Gastrocnemius medialis (tissue), 4 donors: ENCODE measurements at regions of chr7 and their contacts with region 1.

Region 1: DNA sequence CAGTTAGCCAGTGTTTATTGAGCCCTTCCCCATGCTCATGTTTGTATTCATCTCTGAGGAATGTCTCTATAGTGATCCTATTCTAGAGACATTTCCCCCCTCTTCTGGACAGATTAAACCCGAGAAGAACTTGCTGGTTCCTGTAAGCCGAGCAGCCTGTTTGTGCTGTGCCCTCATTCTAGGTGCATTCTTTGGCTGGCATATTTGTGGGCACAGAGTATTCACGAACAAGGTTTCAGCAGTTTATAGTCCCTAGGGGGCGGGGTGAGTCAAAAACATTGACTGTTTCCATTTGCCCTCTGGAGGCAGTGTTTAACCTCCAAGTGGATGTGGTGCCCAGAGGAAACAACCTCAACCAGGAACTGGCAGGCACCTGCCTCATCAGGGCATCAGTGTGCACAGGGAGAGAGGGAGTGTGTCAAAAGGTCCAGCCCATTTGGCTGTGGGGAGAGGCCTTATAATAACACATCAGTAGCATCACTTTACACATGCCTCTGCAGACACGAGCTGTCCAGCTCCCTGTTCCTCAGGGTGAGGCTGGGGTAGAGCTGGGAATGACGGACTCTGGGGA is 273.3 kb upstream of the LRGUK start:
- DNase-seq: peak; percentile 22 to 49
- ATAC-seq: peak; percentile 77 to 82
- H3K4me3 ChIP-seq: no peak overlapping the region
- H3K27ac ChIP-seq: peak overlapping the region in 3 of 4 donors; percentile 0 to 61 (median 43)
- H3K4me1 ChIP-seq: peaks cover 16 to 21% of the 10 kb centered on the region in 2 donors
- H3K27me3 ChIP-seq: no peaks in the 10 kb centered on the region
- CTCF ChIP-seq: peak in 2 of 5 experiments; percentile 28 to 48
- POLR2A ChIP-seq: no peak

Region 2: GRCh38 chr7:133676805-133677370 is 176.9 kb before region 1 on chr7:
- in situ Hi-C with region 1: no loop called
- intact Hi-C with region 1: loop called (anchors 1 kb)
- DNase-seq: no peak
- ATAC-seq: no peak
- H3K4me3 ChIP-seq: no peak overlapping the region
- H3K27ac ChIP-seq: no peak overlapping the region
- H3K4me1 ChIP-seq: peaks cover 0 to 7% of the 10 kb centered on the region in 2 donors
- H3K27me3 ChIP-seq: no peaks in the 10 kb centered on the region
- CTCF ChIP-seq: no peak
- POLR2A ChIP-seq: no peak

Region 3: DNA sequence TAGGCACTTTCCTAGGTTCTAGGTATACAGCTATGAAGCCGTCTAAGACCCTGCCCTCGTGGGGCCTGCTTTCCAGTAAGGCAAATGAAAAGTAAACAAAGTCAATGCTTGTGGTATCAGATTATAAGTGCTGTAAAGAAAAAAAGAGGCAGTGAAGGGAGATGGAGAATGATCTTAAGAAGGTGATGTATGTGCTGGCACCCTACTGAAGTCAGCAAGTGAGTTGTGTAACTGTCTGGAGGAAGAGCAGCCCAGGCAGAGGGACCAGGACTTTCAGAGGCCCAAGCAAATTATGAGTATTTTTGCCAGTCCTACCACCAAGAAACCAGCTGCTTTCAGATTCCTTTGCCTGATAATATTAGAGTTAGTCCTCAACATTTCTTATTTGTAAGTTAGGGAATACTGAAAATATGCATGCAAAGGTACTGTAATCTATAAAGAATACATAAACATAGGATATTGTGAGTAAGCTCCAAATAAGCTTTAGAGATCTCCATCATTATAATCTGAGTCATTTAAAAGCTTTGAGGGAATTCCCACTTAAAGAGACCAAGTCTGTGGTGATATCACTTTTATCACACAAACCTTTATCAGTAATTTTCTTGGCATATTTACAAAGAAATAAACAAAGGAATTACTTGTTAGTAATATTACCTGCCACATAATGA is 55.8 kb before region 1 on chr7:
- in situ Hi-C with region 1: no loop called
- intact Hi-C with region 1: loop called (anchors 5 kb)
- DNase-seq: no peak
- ATAC-seq: no peak
- H3K4me3 ChIP-seq: no peak overlapping the region
- H3K27ac ChIP-seq: no peak overlapping the region
- H3K4me1 ChIP-seq: peaks cover 14 to 15% of the 10 kb centered on the region in 2 donors
- H3K27me3 ChIP-seq: no peaks in the 10 kb centered on the region
- CTCF ChIP-seq: no peak
- POLR2A ChIP-seq: no peak

Region 4: DNA sequence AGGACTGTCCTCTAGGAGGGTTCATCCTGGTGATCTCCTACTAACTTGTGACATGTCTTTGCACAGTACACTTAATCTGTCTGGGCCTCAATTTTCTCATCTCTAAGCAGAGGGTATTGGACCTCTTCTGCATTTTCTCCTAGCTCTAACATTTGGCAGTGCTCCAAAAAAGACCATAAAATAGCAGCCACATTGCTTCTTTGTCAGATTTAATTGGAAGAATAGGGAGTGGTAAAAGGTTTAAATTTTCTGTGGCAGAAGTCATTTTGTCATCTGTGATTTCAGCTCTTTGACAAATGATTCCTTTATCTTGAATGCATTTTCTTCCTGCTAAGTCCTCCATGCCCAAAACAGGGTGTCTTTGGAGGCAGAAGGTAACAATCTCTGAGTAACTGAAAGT is 16.6 kb before region 1 on chr7:
- in situ Hi-C with region 1: no loop called
- intact Hi-C with region 1: no loop called
- DNase-seq: no peak
- ATAC-seq: no peak
- H3K4me3 ChIP-seq: no peak overlapping the region
- H3K27ac ChIP-seq: no peak overlapping the region
- H3K4me1 ChIP-seq: peaks cover 7 to 11% of the 10 kb centered on the region in 2 donors
- H3K27me3 ChIP-seq: no peaks in the 10 kb centered on the region
- CTCF ChIP-seq: no peak
- POLR2A ChIP-seq: no peak